ENCODE measurements at regions of chr5 and their contacts with region 1.

Region 1: DNA sequence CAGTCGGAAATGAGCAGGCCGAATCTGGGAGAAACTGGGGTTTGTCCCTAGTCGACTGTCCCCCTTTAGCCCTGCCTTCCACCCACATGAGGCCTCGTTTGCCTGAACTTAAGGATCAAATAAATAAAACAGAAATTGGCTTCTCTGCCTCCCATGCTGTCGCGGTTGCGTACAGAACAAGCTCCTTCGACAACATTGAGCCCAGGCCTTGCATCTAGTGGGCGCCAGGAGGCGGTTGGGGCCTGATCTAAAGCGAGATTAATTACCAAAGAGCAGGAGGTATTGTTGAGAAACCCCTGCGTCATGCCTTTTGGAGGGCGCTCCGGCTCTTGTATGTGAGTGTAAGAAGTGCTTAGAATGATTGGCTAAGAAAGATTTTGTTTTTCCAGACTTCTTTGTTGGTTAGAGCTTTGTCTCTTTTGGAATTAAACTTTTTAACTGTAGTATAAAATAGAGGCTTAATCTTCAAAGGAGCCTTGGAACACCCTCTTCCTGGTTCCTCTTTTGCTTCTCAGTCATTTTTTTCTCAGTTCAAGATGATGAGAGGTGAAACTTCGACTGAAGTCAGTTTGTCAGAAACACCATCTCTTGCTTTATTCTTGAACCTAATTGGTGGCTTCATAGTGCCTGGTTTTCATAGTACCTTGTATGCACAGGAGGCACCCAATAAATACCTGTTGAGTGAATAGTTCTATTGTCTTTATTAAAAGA is 827 bp downstream of the ATP6V0E1 start:
- DNase-seq: peak; percentile 96
- H3K4me3 Mint-ChIP-seq: peak overlapping the region; percentile 94
- H3K27ac Mint-ChIP-seq: peak overlapping the region; percentile 91
- H3K4me1 Mint-ChIP-seq: peaks cover 6% of the 10 kb centered on the region
- H3K27me3 Mint-ChIP-seq: no peaks in the 10 kb centered on the region
- CTCF ChIP-seq: peak; percentile 43

Region 2: GRCh38 chr5:172733131-172733973 is 251.0 kb before region 1 on chr5:
- CTCF ChIA-PET with region 1: interaction called, 3 read pairs
- POLR2A ChIA-PET with region 1: interaction called, 22 read pairs
- intact Hi-C with region 1: no loop called
- DNase-seq: peak; percentile 93
- H3K4me3 Mint-ChIP-seq: peak overlapping the region; percentile 63
- H3K27ac Mint-ChIP-seq: peak overlapping the region; percentile 99
- H3K4me1 Mint-ChIP-seq: peaks cover 44% of the 10 kb centered on the region
- H3K27me3 Mint-ChIP-seq: no peaks in the 10 kb centered on the region
- CTCF ChIP-seq: peak; percentile 18

Region 3: GRCh38 chr5:172860520-172861443 is 123.6 kb before region 1 on chr5:
- CTCF ChIA-PET with region 1: no interaction called
- POLR2A ChIA-PET with region 1: no interaction called
- intact Hi-C with region 1: no loop called
- DNase-seq: peak; percentile 96
- H3K4me3 Mint-ChIP-seq: peak overlapping the region; percentile 50
- H3K27ac Mint-ChIP-seq: peak overlapping the region; percentile 75
- H3K4me1 Mint-ChIP-seq: peaks cover 64% of the 10 kb centered on the region
- H3K27me3 Mint-ChIP-seq: no peaks in the 10 kb centered on the region
- CTCF ChIP-seq: no peak

Region 4: GRCh38 chr5:172920447-172920849 is 64.0 kb before region 1 on chr5:
- CTCF ChIA-PET with region 1: no interaction called
- POLR2A ChIA-PET with region 1: no interaction called
- intact Hi-C with region 1: no loop called
- DNase-seq: peak; percentile 95
- H3K4me3 Mint-ChIP-seq: no peak overlapping the region
- H3K27ac Mint-ChIP-seq: peak overlapping the region; percentile 89
- H3K4me1 Mint-ChIP-seq: peaks cover 26% of the 10 kb centered on the region
- H3K27me3 Mint-ChIP-seq: no peaks in the 10 kb centered on the region
- CTCF ChIP-seq: no peak

Region 5: DNA sequence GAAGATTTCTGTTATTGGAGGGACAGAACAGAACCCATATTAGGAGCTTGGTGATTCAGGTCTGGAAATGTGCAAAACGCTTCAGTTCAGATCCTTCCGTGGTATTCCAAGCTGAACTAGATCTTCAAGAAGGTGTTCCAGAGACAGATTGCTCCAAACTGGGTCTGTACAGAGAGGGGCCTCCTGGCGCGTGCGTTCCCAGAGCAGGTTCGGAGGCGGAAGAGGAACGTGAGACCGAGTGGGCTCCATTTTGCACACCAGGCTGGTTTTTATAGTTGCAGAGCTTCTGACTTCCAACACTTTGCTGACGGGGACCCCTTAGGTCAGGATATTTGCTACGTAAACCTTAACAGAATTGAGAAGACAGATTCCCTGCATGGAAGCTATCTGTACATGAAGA is 41.8 kb before region 1 on chr5:
- CTCF ChIA-PET with region 1: no interaction called
- POLR2A ChIA-PET with region 1: no interaction called
- intact Hi-C with region 1: no loop called
- DNase-seq: no peak
- H3K4me3 Mint-ChIP-seq: no peak overlapping the region
- H3K27ac Mint-ChIP-seq: peak overlapping the region; percentile 8
- H3K4me1 Mint-ChIP-seq: peaks cover 9% of the 10 kb centered on the region
- H3K27me3 Mint-ChIP-seq: no peaks in the 10 kb centered on the region
- CTCF ChIP-seq: no peak

Region 6: GRCh38 chr5:172973127-172973916 is 11.1 kb before region 1 on chr5:
- CTCF ChIA-PET with region 1: interaction called, 22 read pairs
- POLR2A ChIA-PET with region 1: interaction called, 35 read pairs
- intact Hi-C with region 1: no loop called
- DNase-seq: no peak
- H3K4me3 Mint-ChIP-seq: no peak overlapping the region
- H3K27ac Mint-ChIP-seq: no peak overlapping the region
- H3K4me1 Mint-ChIP-seq: no peaks in the 10 kb centered on the region
- H3K27me3 Mint-ChIP-seq: no peaks in the 10 kb centered on the region
- CTCF ChIP-seq: no peak

Region 7: GRCh38 chr5:173010547-173011464 is 26.4 kb after region 1 on chr5:
- CTCF ChIA-PET with region 1: interaction called, 5 read pairs
- POLR2A ChIA-PET with region 1: interaction called, 36 read pairs
- intact Hi-C with region 1: no loop called
- DNase-seq: no peak
- H3K4me3 Mint-ChIP-seq: no peak overlapping the region
- H3K27ac Mint-ChIP-seq: peak overlapping the region; percentile 75
- H3K4me1 Mint-ChIP-seq: peaks cover 35% of the 10 kb centered on the region
- H3K27me3 Mint-ChIP-seq: no peaks in the 10 kb centered on the region
- CTCF ChIP-seq: no peak

Region 8: DNA sequence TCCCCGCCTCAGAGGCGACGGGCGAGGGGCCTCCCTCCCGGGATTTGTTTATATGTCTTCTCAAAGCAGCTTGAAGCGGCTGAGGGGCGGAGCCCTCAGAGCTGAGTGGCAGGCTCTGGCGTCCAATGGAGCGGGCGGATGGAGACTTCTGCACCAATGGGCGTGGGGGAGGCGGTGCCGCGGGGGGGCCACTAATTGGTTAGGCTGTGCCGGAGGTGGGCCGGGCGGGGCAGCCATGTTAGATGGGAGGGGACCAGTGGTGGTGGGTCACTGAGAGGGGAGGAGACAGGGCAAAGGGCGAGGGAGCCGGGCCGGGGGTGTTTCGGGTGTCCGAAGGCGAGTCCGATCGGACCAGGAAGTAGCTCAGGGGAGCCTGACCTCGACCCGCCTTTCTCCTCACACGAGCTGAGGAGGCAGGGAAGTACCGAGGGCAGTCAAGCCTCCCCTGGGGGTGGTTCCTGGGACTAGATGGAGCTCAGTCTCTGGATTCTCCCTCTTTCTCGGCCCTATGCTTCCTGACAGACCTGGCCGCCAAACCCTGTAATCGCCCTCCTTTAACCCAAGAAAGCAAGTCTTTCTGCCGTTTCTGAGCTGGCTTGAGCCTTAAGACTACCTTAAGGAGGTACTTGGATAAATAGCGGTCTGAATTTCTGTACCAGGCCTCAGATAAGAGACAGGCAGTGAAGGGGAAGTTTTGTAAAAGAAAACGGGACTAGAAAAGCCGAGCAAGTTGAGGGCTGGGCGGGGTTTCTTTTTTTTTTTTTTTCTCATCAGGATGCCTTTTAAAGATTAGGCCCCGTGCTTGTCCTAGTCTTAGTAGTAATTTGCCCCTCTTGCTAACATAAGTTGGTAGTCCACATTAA is 72.9 kb after region 1 on chr5:
- CTCF ChIA-PET with region 1: interaction called, 6 read pairs
- POLR2A ChIA-PET with region 1: interaction called, 97 read pairs
- intact Hi-C with region 1: loop called (anchors 1 kb)
- DNase-seq: peak; percentile 100
- H3K4me3 Mint-ChIP-seq: peak overlapping the region; percentile 99
- H3K27ac Mint-ChIP-seq: peak overlapping the region; percentile 80
- H3K4me1 Mint-ChIP-seq: peaks cover 16% of the 10 kb centered on the region
- H3K27me3 Mint-ChIP-seq: no peaks in the 10 kb centered on the region
- CTCF ChIP-seq: no peak

Region 9: DNA sequence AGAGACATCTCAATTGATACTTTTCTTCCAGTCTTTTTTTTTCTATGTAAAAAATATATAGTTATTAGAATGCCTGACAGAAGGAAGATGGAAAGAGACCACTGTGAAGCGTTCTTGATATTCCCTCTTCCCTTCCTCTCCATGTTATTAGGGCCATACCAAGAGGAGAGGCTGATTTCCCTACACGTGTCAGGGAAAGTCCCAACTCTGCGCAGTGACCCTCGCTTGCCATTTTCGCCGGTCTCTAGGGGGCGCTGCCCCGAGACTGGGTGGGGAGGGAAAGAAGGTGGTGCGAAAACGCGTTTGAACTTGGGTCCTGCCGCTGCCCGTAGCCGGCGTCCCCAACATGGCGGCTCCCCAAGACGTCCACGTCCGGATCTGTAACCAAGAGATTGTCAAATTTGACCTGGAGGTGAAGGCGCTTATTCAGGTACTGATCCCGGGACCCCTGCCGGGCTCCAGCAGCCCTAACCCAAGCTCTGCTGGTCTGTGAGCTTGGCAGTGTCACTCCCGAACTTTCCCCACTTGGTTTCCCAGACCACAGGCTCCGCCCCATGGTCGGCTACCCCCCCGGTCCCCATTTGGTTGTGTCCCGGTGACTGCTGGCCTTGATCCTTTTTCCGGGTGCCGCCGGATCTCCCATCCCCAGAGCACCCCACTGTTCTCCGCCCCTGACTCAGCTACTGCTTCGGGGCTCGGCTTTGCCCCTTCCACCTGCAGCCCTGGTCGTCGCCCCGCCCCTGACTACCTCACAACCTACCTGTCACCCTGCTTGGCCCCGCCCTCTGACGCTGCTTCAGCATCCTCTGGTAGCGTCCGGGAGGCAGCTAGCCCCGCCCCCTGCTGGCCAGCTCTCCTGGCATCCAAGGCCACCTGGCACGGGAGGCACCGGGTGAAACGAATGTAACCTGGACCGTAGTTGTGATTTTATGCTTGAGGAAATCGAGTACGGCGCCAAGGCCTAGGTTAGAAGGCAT is 160.1 kb after region 1 on chr5 and contains the start of gene BNIP1:
- CTCF ChIA-PET with region 1: interaction called, 5 read pairs
- POLR2A ChIA-PET with region 1: interaction called, 37 read pairs
- intact Hi-C with region 1: loop called (anchors 1 kb)
- DNase-seq: peak; percentile 98
- H3K4me3 Mint-ChIP-seq: peak within 1 kb of the TSS; percentile 98
- H3K27ac Mint-ChIP-seq: peak within 1 kb of the TSS; percentile 97
- H3K4me1 Mint-ChIP-seq: no peaks in the 10 kb centered on the region
- H3K27me3 Mint-ChIP-seq: no peaks in the 10 kb centered on the region
- CTCF ChIP-seq: peak; percentile 98
- total RNA-seq, gene BNIP1: 22.1 and 35.1 TPM in 2 replicates

Region 10: DNA sequence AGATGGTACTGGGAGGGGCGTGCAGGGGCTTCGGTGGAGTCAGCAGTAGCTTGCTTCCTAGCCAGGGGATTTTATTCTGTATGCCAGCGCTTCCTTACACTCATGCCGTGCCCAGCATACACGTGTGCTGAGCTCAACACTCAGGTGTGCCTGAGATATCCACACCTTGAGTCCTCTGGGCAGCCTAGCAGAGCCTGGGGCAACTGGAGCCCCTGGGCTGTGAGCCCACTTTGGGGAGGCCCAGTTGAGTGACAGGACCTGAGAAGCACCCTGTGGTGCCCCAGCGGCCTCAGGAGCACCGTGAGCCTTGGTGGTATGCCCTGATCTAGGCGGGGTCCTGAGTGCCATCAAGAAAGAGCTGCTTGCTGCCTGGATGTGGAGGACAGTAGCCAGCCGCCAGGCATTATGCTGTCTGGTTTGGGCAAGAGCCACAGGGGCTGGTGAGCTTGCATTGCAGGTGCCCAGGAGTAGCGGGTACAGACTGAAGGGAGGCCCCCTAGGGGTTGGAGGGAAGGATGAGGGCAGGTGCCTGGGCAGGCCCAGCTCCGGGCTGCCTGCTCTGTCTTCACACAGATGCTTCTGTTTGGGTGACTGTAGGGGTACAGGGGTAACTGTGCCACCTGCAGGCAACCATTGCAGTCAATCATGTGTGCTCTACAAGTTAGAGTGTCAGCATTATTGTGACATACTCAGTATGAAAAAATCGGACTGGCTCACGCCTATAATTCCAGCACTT is 202.8 kb after region 1 on chr5:
- CTCF ChIA-PET with region 1: no interaction called
- POLR2A ChIA-PET with region 1: no interaction called
- intact Hi-C with region 1: no loop called
- DNase-seq: peak; percentile 9
- H3K4me3 Mint-ChIP-seq: no peak overlapping the region
- H3K27ac Mint-ChIP-seq: no peak overlapping the region
- H3K4me1 Mint-ChIP-seq: no peaks in the 10 kb centered on the region
- H3K27me3 Mint-ChIP-seq: peaks cover 10% of the 10 kb centered on the region
- CTCF ChIP-seq: peak; percentile 18

Measured in MCF 10A (cell line).